ENCODE measurements at regions of chr20 and their contacts with region 1.

Region 1: DNA sequence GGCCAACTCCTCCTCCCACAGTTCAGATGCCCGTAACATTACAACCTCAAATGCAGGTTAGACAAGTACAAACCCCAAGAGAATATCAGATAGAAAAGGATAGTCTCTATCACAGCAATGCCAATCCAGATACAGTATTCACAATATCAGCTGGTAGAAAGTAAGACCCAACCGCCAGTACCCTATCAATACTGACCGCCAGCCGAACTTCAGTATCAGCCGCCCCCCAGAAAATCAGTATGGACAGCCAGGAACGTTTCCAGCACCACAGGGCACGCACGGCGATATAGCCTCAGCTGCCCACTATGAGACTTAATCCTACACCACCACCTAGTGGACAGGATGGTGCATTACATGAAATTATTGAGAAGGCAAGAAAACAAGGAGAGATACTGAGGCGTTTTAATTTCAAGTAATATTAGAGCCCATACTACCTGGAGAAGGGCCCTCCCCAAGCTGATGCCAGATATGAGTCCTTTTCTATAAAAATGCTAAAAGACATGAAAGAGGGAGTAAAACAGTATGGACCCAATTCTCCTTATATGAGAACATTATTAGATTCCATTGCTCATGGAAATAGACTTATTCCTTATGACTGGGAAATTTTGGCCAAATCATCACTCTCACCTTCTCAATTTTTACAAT is 17.6 kb upstream of the EIF2S2 start:
- DNase-seq: peak; percentile 70
- H3K4me3 ChIP-seq: no peak overlapping the region
- H3K27ac ChIP-seq: no peak overlapping the region
- H3K4me1 ChIP-seq: no peaks in the 10 kb centered on the region
- H3K27me3 ChIP-seq: no peaks in the 10 kb centered on the region
- CTCF ChIP-seq: peak; percentile 78 to 82 (median 79)
- EP300 ChIP-seq: no peak
- POLR2A ChIP-seq: no peak

Region 2: DNA sequence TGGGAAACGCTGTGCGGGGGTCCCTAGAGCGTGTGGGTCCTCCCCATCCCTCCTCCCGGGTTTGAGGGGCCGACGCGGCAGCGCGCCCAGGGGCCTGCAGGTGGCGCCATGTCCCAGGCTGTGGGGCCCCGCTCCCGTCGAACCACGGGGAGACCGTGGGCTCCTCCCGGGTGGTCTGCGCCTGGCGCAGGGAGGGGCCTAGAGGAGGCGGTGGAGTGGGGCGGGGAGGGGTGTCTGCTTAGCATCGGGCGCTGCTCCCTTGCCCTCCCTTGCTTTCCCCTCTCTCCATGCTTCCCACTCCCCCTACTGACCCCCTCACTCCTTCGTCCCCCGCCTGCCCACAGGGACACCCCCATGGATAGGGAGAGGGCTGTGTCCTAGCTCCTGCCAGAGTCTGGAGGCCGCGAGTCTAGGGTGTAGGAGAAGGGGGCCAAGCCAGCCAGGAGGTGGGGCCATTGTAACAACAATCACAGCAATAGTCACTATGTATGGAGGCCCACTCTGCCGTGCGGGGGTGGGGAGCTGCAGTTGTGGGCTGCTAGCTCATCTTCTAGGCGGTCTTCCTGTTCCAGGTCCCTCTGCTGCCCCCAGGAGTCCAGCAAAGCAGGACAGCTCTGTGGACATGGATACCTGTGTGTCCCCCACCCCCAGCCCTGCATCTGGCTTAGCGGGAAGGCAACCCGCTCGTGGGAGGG is 266.8 kb before region 1 on chr20:
- intact Hi-C with region 1: loop called (anchors 2 kb)
- DNase-seq: peak; percentile 77
- H3K4me3 ChIP-seq: peak overlapping the region in 3 of 4 donors; percentile 14 to 28 (median 25)
- H3K27ac ChIP-seq: no peak overlapping the region
- H3K4me1 ChIP-seq: peaks cover 0 to 29% (median 20%) of the 10 kb centered on the region in 4 donors
- H3K27me3 ChIP-seq: no peaks in the 10 kb centered on the region
- CTCF ChIP-seq: peak; percentile 21 to 67 (median 62)
- EP300 ChIP-seq: no peak
- POLR2A ChIP-seq: no peak

Region 3: GRCh38 chr20:33933469-33933909 is 196.2 kb before region 1 on chr20:
- intact Hi-C with region 1: loop called (anchors 2 kb)
- DNase-seq: peak; percentile 91
- H3K4me3 ChIP-seq: no peak overlapping the region
- H3K27ac ChIP-seq: peak overlapping the region; percentile 24 to 69 (median 58)
- H3K4me1 ChIP-seq: peaks cover 0 to 10% (median 0%) of the 10 kb centered on the region in 4 donors
- H3K27me3 ChIP-seq: no peaks in the 10 kb centered on the region
- CTCF ChIP-seq: peak; percentile 51 to 68 (median 58)
- EP300 ChIP-seq: no peak
- POLR2A ChIP-seq: no peak

Region 4: GRCh38 chr20:34083137-34083536 is 46.5 kb before region 1 on chr20:
- intact Hi-C with region 1: loop called (anchors 5 kb)
- DNase-seq: peak; percentile 85
- H3K4me3 ChIP-seq: no peak overlapping the region
- H3K27ac ChIP-seq: peak overlapping the region; percentile 51 to 70 (median 59)
- H3K4me1 ChIP-seq: peaks cover 0 to 20% (median 14%) of the 10 kb centered on the region in 4 donors
- H3K27me3 ChIP-seq: no peaks in the 10 kb centered on the region
- CTCF ChIP-seq: no peak
- EP300 ChIP-seq: no peak
- POLR2A ChIP-seq: no peak

Measured in sigmoid colon (tissue), 7 donors.